Activated CD4-positive, alpha-beta memory T cell treated with anti-CD3 and anti-CD28 coated beads for 36 hours (primary cell): ENCODE measurements at regions of chr3 and their contacts with region 1.

Region 1: GRCh38 chr3:89072642-89073041 is 34.8 kb upstream of the EPHA3 start:
- DNase-seq: no peak
- H3K4me3 Mint-ChIP-seq: no peak overlapping the region
- H3K27ac Mint-ChIP-seq: no peak overlapping the region
- H3K4me1 Mint-ChIP-seq: no peaks in the 10 kb centered on the region
- H3K27me3 Mint-ChIP-seq: no peaks in the 10 kb centered on the region

Region 2: GRCh38 chr3:88713233-88713691 is 359.4 kb before region 1 on chr3:
- CTCF ChIA-PET with region 1: no interaction called
- POLR2A ChIA-PET with region 1: no interaction called
- intact Hi-C with region 1: loop called (anchors 5 kb)
- DNase-seq: no peak
- H3K4me3 Mint-ChIP-seq: no peak overlapping the region
- H3K27ac Mint-ChIP-seq: no peak overlapping the region
- H3K4me1 Mint-ChIP-seq: no peaks in the 10 kb centered on the region
- H3K27me3 Mint-ChIP-seq: no peaks in the 10 kb centered on the region